ENCODE measurements at regions of chr2 and their contacts with region 1.

Region 1: GRCh38 chr2:96208143-96209010 is at the start of gene STARD7:
- DNase-seq: peak; percentile 98
- ATAC-seq: peak; percentile 92
- H3K4me3 Mint-ChIP-seq: peak within 1 kb of the TSS; percentile 88
- H3K27ac Mint-ChIP-seq: peak within 1 kb of the TSS; percentile 88
- H3K4me1 Mint-ChIP-seq: peaks cover 49% of the 10 kb centered on the region
- H3K27me3 Mint-ChIP-seq: no peaks in the 10 kb centered on the region
- total RNA-seq, gene STARD7: 131 to 180 TPM

Region 2: DNA sequence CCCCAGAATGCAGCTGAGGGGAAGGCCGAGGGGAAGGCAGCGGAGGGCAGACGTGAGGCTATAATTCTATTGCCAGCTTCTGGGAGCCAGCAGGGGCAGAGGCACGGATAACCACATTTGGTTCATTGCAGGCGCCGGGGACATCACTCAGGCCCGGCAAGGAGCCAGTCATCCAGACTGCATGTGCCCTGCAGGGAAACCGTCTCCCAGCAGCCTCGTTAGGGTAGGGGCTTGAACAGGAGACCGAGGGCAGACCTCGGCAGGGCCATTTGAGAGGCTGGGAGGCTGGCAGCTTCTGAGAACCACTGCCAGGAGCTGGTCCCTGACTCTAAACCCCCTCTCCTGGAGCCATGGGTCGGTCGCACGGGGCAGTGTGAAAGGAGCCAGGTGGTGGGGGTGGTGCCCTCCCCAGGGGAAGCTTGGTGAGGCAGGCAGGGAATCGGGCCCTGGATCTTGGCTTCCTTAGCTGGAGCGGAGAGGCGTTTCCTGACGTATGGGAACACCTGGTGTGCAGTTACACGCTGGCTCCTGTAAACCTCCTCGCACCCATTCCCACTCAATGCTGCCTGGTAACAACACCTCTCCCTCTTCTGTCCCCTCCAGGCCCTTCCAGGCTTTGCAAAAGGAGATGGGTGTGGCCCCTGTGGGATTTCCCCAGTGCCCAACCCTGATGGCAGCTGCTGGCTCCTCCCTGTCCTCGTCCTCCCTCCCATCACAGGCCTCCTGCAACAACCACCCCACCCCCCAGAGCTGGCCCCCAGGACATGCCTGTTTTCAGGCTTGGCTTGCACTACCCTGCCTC is 116.6 kb before region 1 on chr2:
- CTCF ChIA-PET with region 1: no interaction called
- DNase-seq: peak; percentile 34
- ATAC-seq: no peak
- H3K4me3 Mint-ChIP-seq: no peak overlapping the region
- H3K27ac Mint-ChIP-seq: no peak overlapping the region
- H3K4me1 Mint-ChIP-seq: no peaks in the 10 kb centered on the region
- H3K27me3 Mint-ChIP-seq: peaks cover 17% of the 10 kb centered on the region

Region 3: GRCh38 chr2:96265840-96266679 is 57.7 kb after region 1 on chr2 and contains the starts of genes CIAO1 and TMEM127:
- CTCF ChIA-PET with region 1: interaction called, 10 read pairs
- DNase-seq: peak; percentile 100
- ATAC-seq: peak; percentile 92
- H3K4me3 Mint-ChIP-seq: peak within 1 kb of the TSS; percentile 96
- H3K27ac Mint-ChIP-seq: peak within 1 kb of the TSS; percentile 87
- H3K4me1 Mint-ChIP-seq: peaks cover 39% of the 10 kb centered on the region
- H3K27me3 Mint-ChIP-seq: no peaks in the 10 kb centered on the region
- total RNA-seq, gene CIAO1: 67.0 to 76.8 TPM
- total RNA-seq, gene TMEM127: 32.7 to 36.9 TPM

Region 4: GRCh38 chr2:96452053-96452452 is 243.7 kb after region 1 on chr2:
- CTCF ChIA-PET with region 1: no interaction called
- DNase-seq: no peak
- ATAC-seq: no peak
- H3K4me3 Mint-ChIP-seq: no peak overlapping the region
- H3K27ac Mint-ChIP-seq: no peak overlapping the region
- H3K4me1 Mint-ChIP-seq: no peaks in the 10 kb centered on the region
- H3K27me3 Mint-ChIP-seq: peaks cover 4% of the 10 kb centered on the region

Measured in activated CD8-positive, alpha-beta memory T cell treated with anti-CD3 and anti-CD28 coated beads, Interleukin-2, amount 10 ng/mL, durations not matched to agents 7 days and 5 days (primary cell).